T-cell (primary cell): ENCODE measurements at regions of chr7 and their contacts with region 1.

Region 1: DNA sequence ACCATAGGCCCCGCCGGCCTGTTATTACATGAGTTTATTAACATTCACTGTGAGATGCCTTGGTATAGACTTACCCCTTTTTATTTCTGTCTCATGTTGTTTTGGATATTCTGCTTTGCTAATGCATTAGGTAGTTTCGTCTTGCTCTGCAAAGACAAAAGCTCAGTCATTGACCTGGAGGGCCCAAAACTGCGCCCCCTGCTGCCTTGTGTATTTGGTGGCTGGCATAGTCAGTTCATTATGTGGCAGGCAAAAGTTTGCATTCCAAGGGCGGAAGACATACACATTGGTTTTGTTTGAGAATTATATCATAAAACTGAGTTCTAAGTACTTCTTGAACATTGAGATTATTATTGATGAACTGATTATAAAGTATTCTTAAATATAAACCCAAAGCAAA is 372.5 kb downstream of the SDK1 start:
- DNase-seq: peak in 34 of 35 experiments; percentile 5 to 64 (median 40)
- ATAC-seq: no peak
- H3K4me3 ChIP-seq: no peak overlapping the region
- H3K4me3 Mint-ChIP-seq: no peak overlapping the region
- H3K27ac ChIP-seq: no peak overlapping the region
- H3K27ac Mint-ChIP-seq: no peak overlapping the region
- H3K4me1 ChIP-seq: peaks cover 4 to 7% of the 10 kb centered on the region in 2 experiments
- H3K4me1 Mint-ChIP-seq: peaks cover 0 to 4% (median 4%) of the 10 kb centered on the region in 3 donors
- H3K27me3 ChIP-seq: peaks cover 0 to 3% of the 10 kb centered on the region in 2 experiments
- H3K27me3 Mint-ChIP-seq: peaks cover 0 to 2% of the 10 kb centered on the region in 2 donors

Region 2: GRCh38 chr7:3683546-3684539 is 10.3 kb after region 1 on chr7:
- CTCF ChIA-PET with region 1: interaction called, 4 to 10 read pairs
- POLR2A ChIA-PET with region 1: interaction called in 1 of 2 experiments, 8 read pairs
- DNase-seq: no peak
- ATAC-seq: no peak
- H3K4me3 ChIP-seq: no peak overlapping the region
- H3K4me3 Mint-ChIP-seq: no peak overlapping the region
- H3K27ac ChIP-seq: no peak overlapping the region
- H3K27ac Mint-ChIP-seq: no peak overlapping the region
- H3K4me1 ChIP-seq: no peaks in the 10 kb centered on the region
- H3K4me1 Mint-ChIP-seq: no peaks in the 10 kb centered on the region
- H3K27me3 ChIP-seq: peaks cover 0 to 5% of the 10 kb centered on the region in 2 experiments
- H3K27me3 Mint-ChIP-seq: peaks cover 5 to 10% of the 10 kb centered on the region in 2 donors

Region 3: GRCh38 chr7:3695602-3696001 is 22.1 kb after region 1 on chr7:
- CTCF ChIA-PET with region 1: no interaction called
- POLR2A ChIA-PET with region 1: no interaction called
- DNase-seq: no peak
- ATAC-seq: no peak
- H3K4me3 ChIP-seq: no peak overlapping the region
- H3K4me3 Mint-ChIP-seq: no peak overlapping the region
- H3K27ac ChIP-seq: no peak overlapping the region
- H3K27ac Mint-ChIP-seq: no peak overlapping the region
- H3K4me1 ChIP-seq: peaks cover 0 to 9% of the 10 kb centered on the region in 2 experiments
- H3K4me1 Mint-ChIP-seq: peaks cover 8 to 21% (median 16%) of the 10 kb centered on the region in 3 donors
- H3K27me3 ChIP-seq: no peaks in the 10 kb centered on the region
- H3K27me3 Mint-ChIP-seq: peaks cover 0 to 12% of the 10 kb centered on the region in 2 donors

Region 4: GRCh38 chr7:4297165-4297917 is 623.8 kb after region 1 on chr7:
- CTCF ChIA-PET with region 1: no interaction called
- POLR2A ChIA-PET with region 1: no interaction called
- DNase-seq: no peak
- ATAC-seq: no peak
- H3K4me3 ChIP-seq: no peak overlapping the region
- H3K4me3 Mint-ChIP-seq: no peak overlapping the region
- H3K27ac ChIP-seq: no peak overlapping the region
- H3K27ac Mint-ChIP-seq: no peak overlapping the region
- H3K4me1 ChIP-seq: no peaks in the 10 kb centered on the region
- H3K4me1 Mint-ChIP-seq: no peaks in the 10 kb centered on the region
- H3K27me3 ChIP-seq: peaks cover 0 to 4% of the 10 kb centered on the region in 2 experiments
- H3K27me3 Mint-ChIP-seq: peaks cover 4 to 6% of the 10 kb centered on the region in 2 donors